Activated T-helper 2 cell treated with anti-CD3 and anti-CD28 coated beads, Interferon-gamma antibody, Interleukin-2, Interleukin-4, amounts not matched to agents 10 μg/mL and 5 μg/mL and 100 μg/mL, durations not matched to agents 14 hours and 24 hours and 36 hours (primary cell): ENCODE measurements at regions of chr6 and their contacts with region 1.

Region 1: DNA sequence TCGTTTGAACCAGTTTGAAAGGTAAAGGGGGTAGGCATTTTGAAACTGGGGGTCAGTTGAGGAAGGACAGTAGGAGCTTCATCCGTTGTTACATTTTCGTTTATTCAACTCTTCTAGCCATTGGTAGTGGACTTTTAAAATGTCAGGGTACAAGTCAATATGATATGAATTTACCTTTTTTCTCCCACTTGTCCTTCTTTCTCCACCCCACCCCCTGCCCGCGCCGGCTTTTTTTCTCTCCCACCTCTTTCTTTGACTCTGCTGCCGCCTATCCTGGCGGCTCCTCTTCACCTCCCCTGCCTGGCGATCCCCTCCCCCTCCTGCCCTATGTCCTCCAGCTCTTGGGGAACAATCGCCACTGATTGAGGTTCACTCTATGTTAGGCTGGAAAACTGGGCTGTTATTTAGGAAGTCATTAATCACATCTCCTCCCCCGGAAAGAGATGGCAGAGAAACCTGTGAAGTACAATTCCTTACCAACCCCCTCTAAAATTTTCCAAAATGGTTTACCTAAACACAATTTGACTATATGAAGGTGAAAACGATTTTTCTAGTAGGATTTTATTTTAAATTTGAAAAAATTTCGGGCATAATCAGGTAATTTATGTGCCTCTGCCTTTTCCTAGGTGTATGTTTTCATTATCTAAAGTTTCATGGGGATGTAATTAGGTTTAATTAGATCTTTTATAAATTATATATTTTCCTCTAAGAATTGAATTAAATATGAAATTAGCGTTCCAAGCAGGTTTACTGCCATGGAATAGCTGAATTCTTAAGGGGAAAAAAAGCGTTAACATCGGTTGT is 778 bp upstream of the LIN28B start:
- DNase-seq: no peak
- H3K4me3 Mint-ChIP-seq: no peak overlapping the region
- H3K27ac Mint-ChIP-seq: no peak overlapping the region
- H3K4me1 Mint-ChIP-seq: peaks cover 18% of the 10 kb centered on the region
- H3K27me3 Mint-ChIP-seq: peaks cover 77% of the 10 kb centered on the region

Region 2: DNA sequence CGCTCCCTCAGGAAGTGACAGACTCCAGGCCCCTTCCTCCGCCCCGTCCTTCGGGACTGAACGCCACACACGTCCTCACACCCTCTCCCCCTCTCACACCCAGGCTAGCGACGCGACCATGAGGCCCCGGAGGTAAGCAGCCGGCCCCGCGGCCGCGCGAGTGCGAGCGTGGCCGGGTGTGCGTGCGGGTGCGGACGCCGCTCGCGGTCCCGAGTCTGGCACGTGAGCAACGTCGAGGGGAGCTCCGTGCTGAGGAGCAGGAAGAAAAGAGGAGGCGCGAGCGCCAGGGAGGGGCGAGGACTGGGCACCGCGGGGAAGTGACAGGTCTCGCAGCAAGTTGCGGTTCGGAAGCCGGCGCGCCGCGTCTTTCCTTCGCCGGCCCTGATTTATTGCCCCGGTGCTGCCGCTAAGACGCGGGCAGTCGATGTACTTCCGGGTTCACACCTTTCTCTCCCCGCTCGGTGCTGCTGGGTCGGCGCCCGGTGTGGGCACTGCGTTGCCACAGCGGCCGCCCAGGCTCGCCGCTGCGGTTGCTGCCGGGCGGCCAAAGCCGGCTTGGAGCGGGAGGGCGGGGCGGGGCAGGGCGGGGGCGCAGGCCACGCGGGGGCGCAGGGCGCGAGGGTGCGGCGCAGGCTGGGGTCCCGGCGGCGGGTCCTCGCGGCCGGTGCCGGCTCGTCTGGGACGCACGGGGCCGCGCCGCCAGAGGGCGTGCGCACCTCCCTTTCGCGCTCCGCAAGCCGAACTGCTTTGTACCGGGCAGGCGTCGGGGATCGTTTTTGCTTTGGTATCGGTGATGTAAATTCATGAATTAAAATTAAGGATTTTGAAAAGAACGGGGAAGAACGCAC is 15.0 kb before region 1 on chr6:
- intact Hi-C with region 1: loop called (anchors 2 kb)
- DNase-seq: peak; percentile 24
- H3K4me3 Mint-ChIP-seq: peak overlapping the region; percentile 57
- H3K27ac Mint-ChIP-seq: no peak overlapping the region
- H3K4me1 Mint-ChIP-seq: peaks cover 3% of the 10 kb centered on the region
- H3K27me3 Mint-ChIP-seq: peaks cover 37% of the 10 kb centered on the region

Region 3: DNA sequence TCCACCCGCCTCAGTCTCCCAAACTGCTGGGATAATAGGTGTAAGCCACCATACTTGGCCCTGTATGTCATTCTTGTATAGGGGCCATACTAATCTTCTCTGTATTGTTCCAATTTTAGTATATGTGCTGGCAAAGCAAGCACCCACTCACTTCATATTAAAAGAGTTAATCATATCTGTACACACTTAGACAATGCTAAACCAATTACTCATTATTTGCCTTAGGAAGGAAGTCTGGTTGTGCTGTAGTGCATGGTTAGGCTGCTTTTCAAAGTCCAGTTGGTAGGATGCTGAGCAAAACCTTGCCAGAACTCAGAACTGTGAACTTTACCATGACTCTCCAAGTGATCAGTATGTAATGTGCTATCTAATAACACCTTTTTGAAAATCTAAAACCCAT is 89.4 kb after region 1 on chr6:
- intact Hi-C with region 1: no loop called
- DNase-seq: no peak
- H3K4me3 Mint-ChIP-seq: no peak overlapping the region
- H3K27ac Mint-ChIP-seq: no peak overlapping the region
- H3K4me1 Mint-ChIP-seq: no peaks in the 10 kb centered on the region
- H3K27me3 Mint-ChIP-seq: peaks cover 17% of the 10 kb centered on the region

Region 4: GRCh38 chr6:105136431-105137350 is 180.6 kb after region 1 on chr6:
- intact Hi-C with region 1: loop called (anchors 5 kb)
- DNase-seq: peak; percentile 14
- H3K4me3 Mint-ChIP-seq: peak overlapping the region; percentile 59
- H3K27ac Mint-ChIP-seq: no peak overlapping the region
- H3K4me1 Mint-ChIP-seq: peaks cover 3% of the 10 kb centered on the region
- H3K27me3 Mint-ChIP-seq: peaks cover 73% of the 10 kb centered on the region